ENCODE measurements at regions of chr1 and their contacts with region 1.

Region 1: GRCh38 chr1:175154629-175155472 is 37.7 kb downstream of the KIAA0040 start:
- DNase-seq: peak; percentile 54

Region 2: GRCh38 chr1:175319418-175320230 is 164.8 kb after region 1 on chr1:
- in situ Hi-C with region 1: loop called (anchors 25 kb)
- DNase-seq: peak; percentile 67

Region 3: GRCh38 chr1:175341631-175342429 is 187.0 kb after region 1 on chr1:
- in situ Hi-C with region 1: no loop called
- DNase-seq: no peak

Region 4: GRCh38 chr1:175597969-175598765 is 443.3 kb after region 1 on chr1:
- in situ Hi-C with region 1: no loop called
- DNase-seq: no peak